OCI-LY7 (cell line): ENCODE measurements at regions of chr7 and their contacts with region 1.

Region 1: GRCh38 chr7:22854158-22855048 is 31.8 kb upstream of the TOMM7 start:
- DNase-seq: peak; percentile 89
- H3K4me3 ChIP-seq: peak overlapping the region; percentile 81
- H3K27ac ChIP-seq: peak overlapping the region; percentile 62
- H3K4me1 ChIP-seq: peaks cover 42% of the 10 kb centered on the region
- CTCF ChIP-seq: peak; percentile 58; the same call in 1 of the 2 replicates

Region 2: DNA sequence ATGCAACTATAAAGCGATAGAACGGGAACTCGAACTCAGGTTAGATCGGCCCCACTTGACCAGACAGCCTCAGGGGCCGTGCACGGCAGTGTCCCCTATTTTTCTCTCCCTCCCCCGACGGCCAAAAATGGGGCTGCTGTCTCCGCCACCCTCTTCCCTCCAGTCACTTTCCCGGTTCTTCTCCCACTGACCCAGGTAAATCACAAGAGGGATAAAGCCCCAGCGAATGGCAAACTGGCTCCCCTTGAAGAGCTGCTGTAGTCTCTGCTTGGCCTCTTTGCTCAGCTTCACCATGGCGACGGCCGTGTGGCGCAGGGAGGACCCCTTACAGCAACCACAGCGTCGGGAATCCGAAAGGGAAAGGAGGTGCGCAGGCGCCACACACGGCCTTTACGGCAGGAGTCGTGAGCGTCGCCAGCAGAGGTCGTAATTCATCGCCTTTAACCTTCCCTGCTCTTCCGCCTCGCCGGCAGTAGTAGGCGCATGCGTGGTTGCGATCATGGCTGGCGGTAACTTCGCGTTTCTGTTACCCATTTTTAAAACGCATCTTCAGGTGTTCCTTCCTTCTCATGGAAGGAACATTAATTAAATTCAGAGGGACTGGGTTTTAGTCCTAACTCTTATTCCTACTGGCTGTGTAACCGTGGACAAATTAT is 31.8 kb before region 1 on chr7 and contains the start of gene TOMM7:
- CTCF ChIA-PET with region 1: no interaction called
- POLR2A ChIA-PET with region 1: interaction called, 5 read pairs
- intact Hi-C with region 1: loop called (anchors 1 kb)
- DNase-seq: peak; percentile 98
- H3K4me3 ChIP-seq: peak within 1 kb of the TSS; percentile 77
- H3K27ac ChIP-seq: peak within 1 kb of the TSS; percentile 39
- H3K4me1 ChIP-seq: peaks cover 29% of the 10 kb centered on the region
- CTCF ChIP-seq: peak; percentile 51
- total RNA-seq, gene TOMM7: 184 and 195 TPM in 2 replicates

Region 3: DNA sequence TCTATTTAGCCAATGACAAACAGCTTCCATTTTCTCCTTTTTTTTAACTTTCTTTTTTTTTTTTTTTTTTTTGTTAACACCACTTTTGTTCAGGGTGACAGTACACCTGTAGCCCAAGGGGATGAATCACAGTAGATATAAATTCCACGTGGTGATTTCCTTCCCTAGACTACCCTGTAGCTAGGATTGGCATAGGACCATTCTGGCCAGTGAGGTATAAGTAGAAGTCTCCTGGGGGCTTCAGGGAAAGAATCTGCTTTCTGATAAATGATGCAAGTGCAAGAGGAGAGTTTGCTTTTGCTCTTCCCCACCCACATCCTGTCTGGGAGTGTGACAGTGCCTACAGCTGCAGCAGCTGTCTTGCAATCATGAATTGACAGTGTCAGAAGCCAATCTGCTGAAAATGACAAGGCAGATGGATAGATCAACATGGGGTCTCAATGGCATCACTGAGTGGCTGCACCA is 31.4 kb after region 1 on chr7:
- CTCF ChIA-PET with region 1: no interaction called
- POLR2A ChIA-PET with region 1: interaction called, 6 read pairs
- intact Hi-C with region 1: loop called (anchors 1 kb)
- DNase-seq: peak; percentile 92
- H3K4me3 ChIP-seq: peak overlapping the region; percentile 30
- H3K27ac ChIP-seq: peak overlapping the region; percentile 39
- H3K4me1 ChIP-seq: peaks cover 18% of the 10 kb centered on the region
- CTCF ChIP-seq: no peak